Mammary epithelial cell (primary cell): ENCODE measurements at regions of chr12 and their contacts with region 1.

Region 1: DNA sequence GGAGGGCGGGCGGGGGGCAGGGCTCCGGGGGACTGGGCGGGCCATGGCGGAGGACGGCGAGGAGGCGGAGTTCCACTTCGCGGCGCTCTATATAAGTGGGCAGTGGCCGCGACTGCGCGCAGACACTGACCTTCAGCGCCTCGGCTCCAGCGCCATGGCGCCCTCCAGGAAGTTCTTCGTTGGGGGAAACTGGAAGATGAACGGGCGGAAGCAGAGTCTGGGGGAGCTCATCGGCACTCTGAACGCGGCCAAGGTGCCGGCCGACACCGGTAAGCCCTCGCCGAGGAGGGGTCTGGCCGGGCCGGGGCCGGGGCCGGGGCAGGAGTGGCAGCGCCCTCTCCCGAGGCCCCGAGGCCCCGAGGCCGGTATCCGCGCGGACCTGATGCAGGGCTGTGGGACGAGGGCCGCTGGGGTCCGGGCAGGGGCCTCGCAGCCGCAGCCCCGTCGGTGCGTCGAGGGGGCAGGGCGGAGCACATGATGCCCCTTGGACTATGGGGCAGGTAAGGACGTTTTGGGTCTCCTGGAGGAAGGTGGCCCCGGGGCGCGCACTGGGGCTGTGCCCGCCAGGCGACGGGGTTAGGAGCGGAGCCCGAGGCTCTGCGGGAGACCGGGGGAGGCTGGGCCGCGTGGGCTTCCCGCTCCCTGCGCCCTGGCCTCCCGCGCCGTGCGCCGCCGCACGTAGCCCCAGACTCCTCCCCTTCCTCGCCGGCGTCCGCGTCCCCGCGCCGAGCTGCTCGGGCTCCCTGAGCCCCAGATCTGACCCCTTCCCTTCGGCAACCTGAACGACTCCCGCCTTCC is at the start of gene TPI1:
- DNase-seq: peak; percentile 72
- H3K4me3 ChIP-seq: peak within 1 kb of the TSS; percentile 37 to 99 (median 85)
- H3K27ac ChIP-seq: peak within 1 kb of the TSS; percentile 81
- H3K4me1 ChIP-seq: peaks cover 42% of the 10 kb centered on the region
- H3K27me3 ChIP-seq: no peaks in the 10 kb centered on the region
- CTCF ChIP-seq: no peak
- total RNA-seq, gene TPI1: 407 to 974 TPM

Region 2: GRCh38 chr12:6696690-6697583 is 170.7 kb before region 1 on chr12:
- CTCF ChIA-PET with region 1: no interaction called
- dilution Hi-C with region 1: no loop called
- in situ Hi-C with region 1: no loop called
- intact Hi-C with region 1: no loop called
- DNase-seq: no peak
- H3K4me3 ChIP-seq: no peak overlapping the region
- H3K27ac ChIP-seq: no peak overlapping the region
- H3K4me1 ChIP-seq: peaks cover 4% of the 10 kb centered on the region
- H3K27me3 ChIP-seq: peaks cover 21% of the 10 kb centered on the region
- CTCF ChIP-seq: no peak

Region 3: DNA sequence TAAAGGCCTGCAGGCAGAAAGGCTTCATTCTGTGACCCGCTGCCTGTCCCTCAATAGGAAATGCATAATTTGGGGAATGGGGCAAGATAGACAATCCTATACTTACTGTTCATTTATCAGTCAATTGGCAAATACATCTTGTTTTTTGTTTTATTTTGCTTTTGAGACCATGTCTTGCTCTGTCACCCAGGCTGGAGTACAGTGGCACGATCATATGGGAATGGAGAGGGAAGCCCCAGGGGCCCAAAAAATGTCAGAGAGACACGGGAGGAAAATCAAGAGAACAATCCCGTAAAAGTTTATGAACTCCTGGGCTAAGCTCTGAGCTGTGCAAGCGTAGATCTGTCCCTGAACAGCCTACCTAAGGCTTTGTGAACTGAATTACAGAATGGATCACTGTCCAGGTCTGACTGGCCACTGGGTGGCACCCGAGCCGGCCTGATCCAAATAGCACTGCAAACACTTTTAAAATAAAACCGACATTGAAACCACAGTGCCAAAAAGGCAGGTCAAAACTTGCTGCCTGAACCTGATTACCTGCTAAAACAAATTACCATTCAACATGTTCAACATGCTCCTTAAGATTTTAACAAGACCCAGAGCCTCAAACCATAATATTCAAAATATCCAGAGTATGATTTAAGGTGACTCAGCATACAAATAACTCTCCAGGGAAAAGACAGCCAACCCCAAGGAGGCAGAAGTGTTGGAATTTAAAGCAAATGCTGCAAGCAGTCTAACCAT is 132.0 kb before region 1 on chr12:
- CTCF ChIA-PET with region 1: no interaction called
- dilution Hi-C with region 1: no loop called
- in situ Hi-C with region 1: no loop called
- intact Hi-C with region 1: loop called (anchors 5 kb)
- DNase-seq: peak; percentile 97
- H3K4me3 ChIP-seq: no peak overlapping the region
- H3K27ac ChIP-seq: peak overlapping the region; percentile 7
- H3K4me1 ChIP-seq: peaks cover 13% of the 10 kb centered on the region
- H3K27me3 ChIP-seq: no peaks in the 10 kb centered on the region
- CTCF ChIP-seq: peak; percentile 76 to 81

Region 4: DNA sequence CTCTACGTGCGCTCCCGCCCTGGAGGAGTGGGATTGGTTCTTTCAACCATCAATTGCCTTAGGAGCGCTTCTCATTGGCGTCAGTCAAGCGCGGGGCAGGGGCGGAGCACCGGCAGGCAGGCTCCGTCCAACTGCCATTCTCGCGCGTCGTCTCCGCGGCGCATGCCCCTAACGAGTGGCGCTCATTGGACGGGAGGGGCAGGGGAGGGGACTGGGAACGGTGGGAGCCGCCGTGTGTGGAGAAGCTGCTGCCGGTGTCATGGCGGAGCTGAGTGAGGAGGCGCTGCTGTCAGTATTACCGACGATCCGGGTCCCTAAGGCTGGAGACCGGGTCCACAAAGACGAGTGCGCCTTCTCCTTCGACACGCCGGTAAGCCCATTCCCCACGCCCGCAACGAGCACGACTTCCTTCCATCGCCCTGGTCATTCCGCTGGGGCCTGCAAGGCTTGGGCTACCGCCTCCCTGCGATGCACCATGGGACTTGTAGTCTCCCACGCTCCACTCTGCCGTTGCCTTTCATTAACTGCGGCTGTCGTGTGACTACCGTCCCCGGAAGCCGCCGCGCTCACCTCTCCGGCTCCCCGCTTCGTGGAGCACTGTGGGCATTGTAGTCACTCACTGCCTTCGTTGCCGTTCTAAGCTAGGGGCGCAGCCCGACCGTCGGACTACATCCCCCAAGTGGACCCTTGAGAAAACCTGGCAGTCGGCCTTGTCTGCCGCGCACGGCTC is 15.5 kb before region 1 on chr12 and contains the start of gene USP5:
- CTCF ChIA-PET with region 1: interaction called, 10 read pairs
- dilution Hi-C with region 1: no loop called
- in situ Hi-C with region 1: no loop called
- intact Hi-C with region 1: loop called (anchors 1 kb)
- DNase-seq: peak; percentile 100
- H3K4me3 ChIP-seq: peak within 1 kb of the TSS; percentile 65 to 84 (median 78)
- H3K27ac ChIP-seq: peak within 1 kb of the TSS; percentile 84
- H3K4me1 ChIP-seq: peaks cover 20% of the 10 kb centered on the region
- H3K27me3 ChIP-seq: no peaks in the 10 kb centered on the region
- CTCF ChIP-seq: no peak
- total RNA-seq, gene USP5: 79.4 to 128 TPM

Region 5: DNA sequence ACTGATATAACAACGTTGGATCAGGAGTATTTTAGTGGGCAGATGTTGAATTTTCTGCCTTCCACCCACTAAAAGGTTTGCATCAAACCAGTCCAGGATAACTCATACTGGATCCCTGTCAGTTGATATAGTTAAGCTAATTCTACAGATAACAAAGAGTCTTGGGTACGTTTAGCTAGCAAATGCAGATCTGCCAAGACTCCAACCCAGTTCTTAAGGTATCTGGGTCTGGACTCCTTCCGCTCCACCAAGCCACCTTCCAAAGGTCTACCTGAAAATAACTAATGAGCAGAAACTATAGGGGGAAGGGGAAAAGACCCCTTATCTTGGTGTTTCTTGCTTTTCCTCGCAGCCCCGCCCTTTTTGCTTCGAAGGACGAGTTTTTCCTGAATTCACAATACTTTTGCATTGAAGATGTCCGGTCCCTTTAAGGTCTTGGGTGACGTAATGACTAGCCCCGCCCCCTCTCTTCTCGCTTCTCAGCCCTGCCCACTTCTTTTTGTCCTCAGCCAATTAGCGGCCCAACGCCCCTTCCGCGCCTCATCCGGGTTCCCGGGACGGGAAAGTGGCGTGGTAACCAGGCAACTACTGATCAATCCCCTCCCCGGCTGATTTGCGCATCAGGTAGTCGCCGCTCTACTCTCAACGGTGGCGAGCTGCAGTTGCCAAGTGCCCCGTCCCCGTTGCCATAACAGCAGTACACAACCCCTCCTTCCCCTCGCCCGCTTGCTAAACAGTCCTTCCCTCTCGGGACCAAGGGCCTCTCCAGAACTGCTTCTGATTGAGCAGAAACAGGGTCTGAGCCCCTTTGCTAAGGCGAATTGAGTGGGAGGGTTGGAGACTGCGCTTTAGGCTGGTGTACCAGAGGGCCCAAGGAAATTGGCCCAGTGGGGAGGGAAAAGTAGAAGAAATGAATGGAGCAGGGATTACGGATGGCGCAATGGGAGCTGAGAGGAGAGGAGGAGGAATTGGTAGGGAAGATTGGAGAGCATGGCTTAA is 37.0 kb after region 1 on chr12 and contains the start of gene LRRC23:
- CTCF ChIA-PET with region 1: no interaction called
- dilution Hi-C with region 1: no loop called
- in situ Hi-C with region 1: no loop called
- intact Hi-C with region 1: loop called (anchors 1 kb)
- DNase-seq: peak; percentile 93
- H3K4me3 ChIP-seq: peak within 1 kb of the TSS; percentile 69 to 78 (median 73)
- H3K27ac ChIP-seq: peak within 1 kb of the TSS; percentile 91
- H3K4me1 ChIP-seq: peaks cover 9% of the 10 kb centered on the region
- H3K27me3 ChIP-seq: no peaks in the 10 kb centered on the region
- CTCF ChIP-seq: no peak
- total RNA-seq, gene LRRC23: 4.3 to 4.7 TPM

Region 6: DNA sequence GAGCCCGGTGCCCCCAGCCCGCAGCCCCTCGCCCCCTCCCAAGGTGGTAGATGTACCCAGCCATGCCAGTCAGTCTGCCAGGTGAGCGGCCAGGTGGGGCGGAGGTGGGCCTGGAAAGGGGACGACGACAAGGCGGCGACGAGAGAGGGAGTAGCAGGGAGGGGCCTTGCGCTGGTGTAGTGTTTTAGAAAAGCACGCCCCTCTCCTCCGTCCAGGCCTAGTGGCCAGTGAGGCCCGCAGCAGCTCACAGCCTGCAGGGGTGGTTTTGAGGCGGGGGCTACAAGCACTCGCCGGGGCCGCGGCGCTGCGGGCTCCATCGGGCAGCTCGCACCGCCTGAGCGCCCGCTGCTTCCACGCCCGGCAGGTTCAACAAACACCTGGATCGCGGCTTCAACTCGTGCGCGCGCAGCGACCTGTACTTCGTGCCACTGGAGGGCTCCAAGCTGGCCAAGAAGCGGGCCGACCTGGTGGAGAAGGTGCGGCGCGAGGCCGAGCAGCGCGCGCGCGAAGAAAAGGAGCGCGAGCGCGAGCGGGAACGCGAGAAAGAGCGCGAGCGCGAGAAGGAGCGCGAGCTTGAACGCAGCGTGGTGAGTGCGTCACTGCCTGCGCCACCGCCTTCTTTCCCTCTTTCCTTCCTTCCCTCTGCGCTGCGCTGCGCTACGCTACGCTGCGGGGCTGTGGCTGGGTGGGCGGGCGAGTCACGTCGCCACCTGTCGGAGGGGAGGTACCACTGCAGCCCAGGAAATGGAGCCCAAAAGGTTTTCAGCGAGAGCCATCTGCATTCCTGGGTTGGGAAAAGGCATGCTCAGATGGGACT is 70.1 kb after region 1 on chr12:
- CTCF ChIA-PET with region 1: interaction called, 7 read pairs
- dilution Hi-C with region 1: no loop called
- in situ Hi-C with region 1: no loop called
- intact Hi-C with region 1: loop called (anchors 1 kb)
- DNase-seq: peak; percentile 95
- H3K4me3 ChIP-seq: peak overlapping the region; percentile 33 to 59 (median 48)
- H3K27ac ChIP-seq: peak overlapping the region; percentile 14
- H3K4me1 ChIP-seq: peaks cover 31% of the 10 kb centered on the region
- H3K27me3 ChIP-seq: no peaks in the 10 kb centered on the region
- CTCF ChIP-seq: peak; percentile 74 to 96

Region 7: GRCh38 chr12:6965026-6965661 is 97.5 kb after region 1 on chr12:
- CTCF ChIA-PET with region 1: interaction called, 8 read pairs
- dilution Hi-C with region 1: no loop called
- in situ Hi-C with region 1: loop called in 1 of 2 experiments (anchors 5 kb)
- intact Hi-C with region 1: no loop called
- DNase-seq: peak; percentile 82
- H3K4me3 ChIP-seq: peak overlapping the region; percentile 74 to 97 (median 94)
- H3K27ac ChIP-seq: peak overlapping the region; percentile 88
- H3K4me1 ChIP-seq: peaks cover 55% of the 10 kb centered on the region
- H3K27me3 ChIP-seq: no peaks in the 10 kb centered on the region
- CTCF ChIP-seq: peak; percentile 93 to 95

Region 8: DNA sequence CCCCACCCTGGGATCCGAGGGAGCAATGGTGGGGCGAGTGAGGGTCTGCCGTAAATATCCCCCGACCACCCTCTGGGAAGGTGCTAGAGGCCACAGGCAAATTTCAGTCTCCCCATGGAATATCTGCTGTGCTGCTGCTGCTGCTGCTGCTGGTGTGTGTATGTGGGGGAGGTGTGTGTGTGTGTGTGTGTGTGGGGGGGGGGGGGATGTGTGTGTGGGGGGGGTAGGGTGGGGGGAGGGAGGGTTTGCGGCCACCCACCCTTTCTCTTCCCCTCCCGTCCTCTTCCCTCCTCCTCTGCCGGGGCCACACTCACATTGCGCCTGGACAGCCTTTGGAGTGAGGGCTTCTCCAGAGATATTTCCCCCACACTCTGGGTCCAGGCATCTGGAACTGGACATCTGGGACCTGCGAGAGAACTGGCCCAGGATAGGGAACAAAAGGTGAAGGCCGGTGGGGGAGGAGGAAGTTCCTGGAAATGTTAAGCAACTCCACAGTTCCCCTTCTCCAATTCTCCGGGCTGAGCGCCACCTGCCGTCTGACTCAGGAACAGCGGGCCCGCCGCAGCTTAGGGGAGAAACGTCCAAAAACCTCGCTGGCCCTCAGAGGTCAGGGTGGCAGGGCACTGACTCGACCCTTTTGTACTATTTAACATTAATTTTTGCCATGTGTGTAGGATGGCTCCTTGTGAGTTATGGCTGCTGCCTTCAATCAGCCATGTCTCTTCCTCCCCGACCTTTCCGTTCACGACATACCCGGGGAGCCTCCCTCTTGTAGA is 241.4 kb after region 1 on chr12 and contains the start of gene C1RL:
- CTCF ChIA-PET with region 1: no interaction called
- dilution Hi-C with region 1: no loop called
- in situ Hi-C with region 1: no loop called
- intact Hi-C with region 1: loop called (anchors 1 kb)
- DNase-seq: peak; percentile 75
- H3K4me3 ChIP-seq: peak within 1 kb of the TSS; percentile 75 to 80 (median 76)
- H3K27ac ChIP-seq: peak within 1 kb of the TSS; percentile 81
- H3K4me1 ChIP-seq: peaks cover 23% of the 10 kb centered on the region
- H3K27me3 ChIP-seq: no peaks in the 10 kb centered on the region
- CTCF ChIP-seq: peak; percentile 96 to 99
- total RNA-seq, gene C1RL: 32.1 to 38.3 TPM